ENCODE measurements at regions of chr11 and their contacts with region 1.

Region 1: DNA sequence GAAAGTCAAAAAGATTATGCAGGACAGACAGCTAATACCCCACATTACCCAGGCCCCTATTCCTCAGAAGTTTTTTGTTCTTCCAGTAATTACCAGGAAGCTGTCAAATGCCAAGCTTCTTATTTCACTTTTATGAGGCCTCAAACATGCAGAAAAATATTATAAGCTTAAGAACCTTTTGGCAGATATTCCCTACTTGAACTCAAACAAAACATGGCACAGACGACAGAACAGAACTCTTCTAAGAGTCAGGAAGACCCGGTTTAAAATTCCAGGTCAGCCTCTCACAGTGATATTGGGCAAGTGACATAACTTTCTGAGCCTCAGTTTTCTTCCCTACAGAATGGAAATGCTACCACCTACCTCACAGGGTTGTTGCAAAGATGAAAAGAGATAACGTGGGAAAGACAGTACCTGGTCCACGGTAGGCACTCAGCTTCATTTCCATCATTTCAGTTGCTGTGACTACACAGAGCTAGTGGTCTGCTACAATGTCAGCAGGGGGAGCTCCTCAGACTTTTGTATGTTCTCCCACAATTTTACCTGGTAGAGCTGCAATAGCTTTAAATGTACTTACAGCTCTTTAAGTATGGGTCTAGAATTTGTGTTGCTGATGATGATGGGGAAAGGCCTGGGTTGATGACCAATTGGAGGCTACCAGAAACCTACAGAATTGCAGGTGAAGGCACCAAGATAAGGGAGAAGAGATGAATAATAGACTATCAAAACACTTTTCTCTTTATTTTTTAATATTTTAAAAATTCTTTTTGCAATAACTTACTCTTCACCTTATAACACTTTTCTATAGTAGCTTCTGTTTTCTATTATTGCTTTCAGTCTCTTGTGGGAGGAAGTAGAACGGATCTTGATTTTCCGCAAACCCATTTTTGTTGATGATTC is 98.3 kb upstream of the CHRM4 start:
- DNase-seq: peak; percentile 56 to 66
- ATAC-seq: peak; percentile 96 to 98
- H3K4me3 ChIP-seq: no peak overlapping the region
- H3K27ac ChIP-seq: no peak overlapping the region
- H3K4me1 ChIP-seq: no peaks in the 10 kb centered on the region
- CTCF ChIP-seq: peak; percentile 73
- EP300 ChIP-seq: no peak
- POLR2A ChIP-seq: no peak
- RAD21 ChIP-seq: peak; percentile 56 to 61

Region 2: DNA sequence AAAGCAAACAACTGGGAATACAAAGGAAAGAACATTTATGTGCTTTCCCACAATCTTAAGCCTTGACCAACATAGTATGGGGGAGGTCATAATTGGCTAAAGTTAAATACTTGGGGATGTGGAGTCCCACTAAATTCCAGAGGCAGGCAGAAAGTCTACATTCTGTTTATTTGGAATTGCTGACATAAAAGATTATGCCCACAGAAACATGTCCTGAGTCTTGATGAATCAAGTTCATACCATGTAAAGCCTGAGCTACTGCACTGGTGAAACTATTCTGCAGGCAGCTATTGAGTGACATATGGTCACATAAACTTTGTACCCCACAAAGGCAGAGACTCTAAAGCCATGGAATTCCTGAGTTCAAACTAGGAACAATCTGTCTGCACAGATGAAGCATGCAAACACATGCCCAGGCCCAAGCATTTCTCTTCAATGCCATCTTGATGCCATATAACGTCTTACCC is 28.4 kb before region 1 on chr11:
- CTCF ChIA-PET with region 1: interaction called, 11 read pairs
- POLR2A ChIA-PET with region 1: no interaction called
- DNase-seq: no peak
- ATAC-seq: no peak
- H3K4me3 ChIP-seq: no peak overlapping the region
- H3K27ac ChIP-seq: no peak overlapping the region
- H3K4me1 ChIP-seq: no peaks in the 10 kb centered on the region
- CTCF ChIP-seq: no peak
- EP300 ChIP-seq: no peak
- POLR2A ChIP-seq: no peak
- RAD21 ChIP-seq: no peak

Region 3: GRCh38 chr11:46475926-46476545 is 13.9 kb before region 1 on chr11:
- CTCF ChIA-PET with region 1: interaction called, 35 read pairs
- POLR2A ChIA-PET with region 1: no interaction called
- DNase-seq: no peak
- ATAC-seq: no peak
- H3K4me3 ChIP-seq: no peak overlapping the region
- H3K27ac ChIP-seq: no peak overlapping the region
- H3K4me1 ChIP-seq: peaks cover 14% of the 10 kb centered on the region
- CTCF ChIP-seq: no peak
- EP300 ChIP-seq: no peak
- POLR2A ChIP-seq: no peak
- RAD21 ChIP-seq: no peak

Region 4: DNA sequence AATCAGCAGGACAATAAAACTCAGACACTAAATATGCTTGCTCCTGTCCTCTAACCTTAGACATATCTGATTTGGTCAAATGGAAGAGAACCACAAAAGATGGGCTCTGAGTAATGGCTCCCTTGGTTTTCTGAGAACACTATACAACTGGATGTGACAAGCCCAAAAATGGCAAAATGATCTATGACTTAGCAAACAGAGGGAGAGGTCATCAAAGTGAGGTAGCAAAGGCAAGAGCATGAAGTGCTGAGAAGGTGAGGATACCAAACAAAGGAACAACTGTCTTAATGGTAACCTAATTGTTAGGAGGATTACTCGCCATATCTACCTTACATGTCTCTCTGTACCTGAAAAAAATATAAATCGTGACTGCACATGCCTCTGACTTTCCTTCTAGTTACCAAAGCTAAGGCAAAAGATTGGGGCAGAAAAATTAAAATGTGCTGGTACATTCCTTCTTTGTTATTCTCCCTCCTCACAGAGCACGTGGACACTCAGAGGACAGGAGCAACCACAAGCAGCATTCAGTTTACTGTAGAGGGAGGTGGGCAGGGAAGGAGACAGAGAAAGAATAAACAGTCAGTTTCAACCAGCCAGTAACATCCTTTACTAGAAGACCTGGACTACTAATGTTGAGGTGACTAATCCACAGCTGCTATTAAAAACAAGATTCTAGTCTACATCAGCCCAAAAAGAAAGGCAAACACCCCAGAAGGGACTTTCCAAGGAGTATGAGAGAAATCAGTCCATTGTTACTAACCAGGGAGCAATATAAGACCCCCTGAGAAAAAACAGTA is 15.1 kb after region 1 on chr11:
- CTCF ChIA-PET with region 1: interaction called, 91 read pairs
- POLR2A ChIA-PET with region 1: interaction called, 3 read pairs
- DNase-seq: no peak
- ATAC-seq: no peak; a peak in 1 of 6 replicates
- H3K4me3 ChIP-seq: no peak overlapping the region
- H3K27ac ChIP-seq: no peak overlapping the region
- H3K4me1 ChIP-seq: peaks cover 12% of the 10 kb centered on the region; the same call in 2 of the 3 replicates
- CTCF ChIP-seq: no peak
- EP300 ChIP-seq: no peak
- POLR2A ChIP-seq: no peak
- RAD21 ChIP-seq: no peak

Region 5: GRCh38 chr11:46529095-46529905 is 39.4 kb after region 1 on chr11:
- CTCF ChIA-PET with region 1: interaction called, 13 read pairs
- POLR2A ChIA-PET with region 1: no interaction called
- DNase-seq: peak; percentile 73 to 89
- ATAC-seq: peak; percentile 85 to 97
- H3K4me3 ChIP-seq: no peak overlapping the region
- H3K27ac ChIP-seq: no peak overlapping the region
- H3K4me1 ChIP-seq: no peaks in the 10 kb centered on the region
- CTCF ChIP-seq: peak; percentile 67
- EP300 ChIP-seq: no peak
- POLR2A ChIP-seq: no peak
- RAD21 ChIP-seq: peak; percentile 46 to 55; a peak in 4 of 5 replicates

Region 6: GRCh38 chr11:46537537-46538295 is 47.8 kb after region 1 on chr11:
- CTCF ChIA-PET with region 1: interaction called, 20 read pairs
- POLR2A ChIA-PET with region 1: no interaction called
- DNase-seq: peak; percentile 75 to 83
- ATAC-seq: peak; percentile 96
- H3K4me3 ChIP-seq: no peak overlapping the region
- H3K27ac ChIP-seq: no peak overlapping the region
- H3K4me1 ChIP-seq: 0 out of 3 replicates have a peak, but pooled peaks cover 4% of the 10 kb centered on the region
- CTCF ChIP-seq: peak; percentile 91
- EP300 ChIP-seq: no peak
- POLR2A ChIP-seq: no peak
- RAD21 ChIP-seq: peak; percentile 82 to 94

Region 7: DNA sequence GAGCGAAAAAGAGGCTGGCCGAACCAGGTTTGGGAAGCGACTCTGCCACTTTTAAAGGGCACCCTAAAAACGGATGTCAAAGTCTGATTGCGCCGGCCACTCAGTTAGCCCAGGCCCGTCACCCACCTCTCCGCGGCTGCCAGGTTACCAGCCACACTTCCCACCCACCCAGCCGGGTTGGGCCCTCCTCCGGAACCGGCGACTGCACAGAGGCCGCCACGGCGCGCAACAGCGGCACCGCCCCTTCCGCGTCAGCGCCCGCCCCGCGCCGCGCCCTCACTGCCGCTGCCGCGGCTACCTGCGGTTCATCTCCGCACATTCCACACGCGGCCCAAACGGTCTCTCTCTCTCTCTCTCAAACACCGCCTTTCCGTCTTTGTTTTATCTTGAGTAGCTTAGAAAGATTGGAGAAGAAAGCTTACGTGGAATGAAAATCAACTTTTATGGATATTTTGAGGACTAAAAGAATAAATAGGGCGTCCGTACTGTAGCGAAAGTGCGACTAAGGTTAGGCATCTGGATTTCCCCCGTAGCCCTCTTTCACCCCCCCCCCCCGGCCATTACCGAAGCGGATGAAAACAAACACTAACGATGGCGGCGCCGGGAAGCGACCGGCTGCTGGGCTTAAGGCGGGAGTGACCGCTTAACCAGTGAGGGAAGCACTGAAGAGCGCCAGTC is 127.2 kb after region 1 on chr11 and contains the starts of genes ATG13 and HARBI1:
- CTCF ChIA-PET with region 1: interaction called, 27 read pairs
- POLR2A ChIA-PET with region 1: no interaction called
- DNase-seq: peak; percentile 86 to 92
- ATAC-seq: peak; percentile 98
- H3K4me3 ChIP-seq: peak within 1 kb of the TSS; percentile 96
- H3K27ac ChIP-seq: peak within 1 kb of the TSS; percentile 96 to 99
- H3K4me1 ChIP-seq: peaks cover 18% of the 10 kb centered on the region; the same call in 2 of the 3 replicates
- CTCF ChIP-seq: no peak
- EP300 ChIP-seq: no peak; a peak in 1 of 5 replicates
- POLR2A ChIP-seq: peak; percentile 85
- RAD21 ChIP-seq: no peak
- polyA plus RNA-seq, gene ATG13: 58.6 and 75.4 TPM in 2 replicates
- polyA plus RNA-seq, gene HARBI1: 5.6 and 6.2 TPM in 2 replicates

Region 8: GRCh38 chr11:46649180-46649738 is 159.3 kb after region 1 on chr11:
- CTCF ChIA-PET with region 1: no interaction called
- POLR2A ChIA-PET with region 1: no interaction called
- DNase-seq: peak in 1 of 2 experiments; percentile 27
- ATAC-seq: peak in 1 of 2 experiments; percentile 74; a peak in 4 of 6 replicates
- H3K4me3 ChIP-seq: no peak overlapping the region
- H3K27ac ChIP-seq: peak overlapping the region in 1 of 2 experiments; percentile 30; a peak in 2 of 6 replicates
- H3K4me1 ChIP-seq: 0 out of 3 replicates have a peak, but pooled peaks cover 3% of the 10 kb centered on the region
- CTCF ChIP-seq: no peak
- EP300 ChIP-seq: no peak
- POLR2A ChIP-seq: no peak
- RAD21 ChIP-seq: no peak

Measured in A549 (cell line).